ENCODE measurements at regions of chr12 and their contacts with region 1.

Region 1: DNA sequence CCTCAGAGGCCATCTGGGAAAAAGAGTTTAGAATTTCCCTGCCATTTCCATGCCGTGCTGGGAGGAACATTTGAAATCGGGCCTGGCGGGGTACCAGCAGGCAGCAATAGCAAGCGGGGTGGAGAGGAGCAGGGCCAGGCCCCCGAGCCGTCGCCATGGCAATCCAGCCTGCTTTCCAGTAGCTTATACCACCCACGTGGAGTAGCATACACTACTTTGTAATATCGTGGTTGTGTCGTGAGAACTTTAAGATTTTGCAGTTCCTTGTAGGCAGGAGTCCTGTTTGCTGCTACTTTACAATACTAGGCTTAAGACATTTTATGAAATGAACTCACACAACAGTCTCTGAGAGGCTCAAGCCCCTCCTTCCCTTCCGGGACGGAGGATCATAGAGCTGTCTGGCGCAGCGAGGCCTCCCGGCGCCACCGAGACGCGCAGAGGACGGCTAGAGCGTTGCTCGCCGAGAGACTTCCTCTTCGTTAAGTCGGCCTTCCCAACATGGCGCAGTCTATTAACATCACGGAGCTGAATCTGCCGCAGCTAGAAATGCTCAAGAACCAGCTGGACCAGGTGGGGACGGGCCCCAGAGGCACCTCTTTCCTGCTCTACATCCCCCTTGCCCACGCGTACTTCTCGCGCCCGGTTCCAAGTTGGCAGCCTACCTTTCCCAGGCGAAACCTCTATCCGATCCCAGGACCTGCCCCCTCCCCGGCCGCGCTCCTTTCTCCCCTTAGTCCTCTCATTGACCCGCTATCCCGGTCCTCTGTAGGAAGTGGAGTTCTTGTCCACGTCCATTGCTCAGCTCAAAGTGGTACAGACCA is at the start of gene PFDN5:
- DNase-seq: peak; percentile 94
- ATAC-seq: peak; percentile 90
- H3K4me3 Mint-ChIP-seq: peak within 1 kb of the TSS; percentile 98
- H3K27ac Mint-ChIP-seq: peak within 1 kb of the TSS; percentile 91
- H3K4me1 Mint-ChIP-seq: peaks cover 43% of the 10 kb centered on the region
- H3K27me3 Mint-ChIP-seq: no peaks in the 10 kb centered on the region
- CTCF ChIP-seq: no peak
- total RNA-seq, gene PFDN5: 322 to 373 TPM

Region 2: GRCh38 chr12:53180220-53180930 is 114.9 kb before region 1 on chr12 and contains the starts of genes CSAD and ZNF740:
- CTCF ChIA-PET with region 1: interaction called, 3 read pairs
- POLR2A ChIA-PET with region 1: interaction called, 11 read pairs
- intact Hi-C with region 1: no loop called
- DNase-seq: peak; percentile 99
- ATAC-seq: peak; percentile 95
- H3K4me3 Mint-ChIP-seq: peak within 1 kb of the TSS; percentile 89
- H3K27ac Mint-ChIP-seq: peak within 1 kb of the TSS; percentile 96
- H3K4me1 Mint-ChIP-seq: peaks cover 51% of the 10 kb centered on the region
- H3K27me3 Mint-ChIP-seq: no peaks in the 10 kb centered on the region
- CTCF ChIP-seq: no peak
- total RNA-seq, gene CSAD: 13.8 to 18.6 TPM
- total RNA-seq, gene ZNF740: 31.3 to 35.9 TPM